ENCODE measurements at regions of chr1 and their contacts with region 1.

Region 1: GRCh38 chr1:108079440-108080025 is 114.6 kb upstream of the VAV3 start:
- DNase-seq: peak; percentile 21 to 67
- ATAC-seq: peak; percentile 39 to 47 (median 43)
- H3K4me3 ChIP-seq: no peak overlapping the region
- H3K4me3 Mint-ChIP-seq: peak overlapping the region; percentile 61
- H3K27ac ChIP-seq: peak overlapping the region; percentile 74
- H3K27ac Mint-ChIP-seq: peak overlapping the region; percentile 61 to 82
- H3K4me1 ChIP-seq: peaks cover 45% of the 10 kb centered on the region
- H3K4me1 Mint-ChIP-seq: peaks cover 62 to 63% of the 10 kb centered on the region in 2 donors
- H3K27me3 ChIP-seq: no peaks in the 10 kb centered on the region
- H3K27me3 Mint-ChIP-seq: no peaks in the 10 kb centered on the region
- CTCF ChIP-seq: no peak

Region 2: GRCh38 chr1:108009603-108010195 is 69.8 kb before region 1 on chr1:
- intact Hi-C with region 1: no loop called
- DNase-seq: no peak
- ATAC-seq: no peak
- H3K4me3 ChIP-seq: no peak overlapping the region
- H3K4me3 Mint-ChIP-seq: no peak overlapping the region
- H3K27ac ChIP-seq: no peak overlapping the region
- H3K27ac Mint-ChIP-seq: no peak overlapping the region
- H3K4me1 ChIP-seq: no peaks in the 10 kb centered on the region
- H3K4me1 Mint-ChIP-seq: peaks cover 0 to 5% of the 10 kb centered on the region in 2 donors
- H3K27me3 ChIP-seq: no peaks in the 10 kb centered on the region
- H3K27me3 Mint-ChIP-seq: no peaks in the 10 kb centered on the region
- CTCF ChIP-seq: no peak

Region 3: DNA sequence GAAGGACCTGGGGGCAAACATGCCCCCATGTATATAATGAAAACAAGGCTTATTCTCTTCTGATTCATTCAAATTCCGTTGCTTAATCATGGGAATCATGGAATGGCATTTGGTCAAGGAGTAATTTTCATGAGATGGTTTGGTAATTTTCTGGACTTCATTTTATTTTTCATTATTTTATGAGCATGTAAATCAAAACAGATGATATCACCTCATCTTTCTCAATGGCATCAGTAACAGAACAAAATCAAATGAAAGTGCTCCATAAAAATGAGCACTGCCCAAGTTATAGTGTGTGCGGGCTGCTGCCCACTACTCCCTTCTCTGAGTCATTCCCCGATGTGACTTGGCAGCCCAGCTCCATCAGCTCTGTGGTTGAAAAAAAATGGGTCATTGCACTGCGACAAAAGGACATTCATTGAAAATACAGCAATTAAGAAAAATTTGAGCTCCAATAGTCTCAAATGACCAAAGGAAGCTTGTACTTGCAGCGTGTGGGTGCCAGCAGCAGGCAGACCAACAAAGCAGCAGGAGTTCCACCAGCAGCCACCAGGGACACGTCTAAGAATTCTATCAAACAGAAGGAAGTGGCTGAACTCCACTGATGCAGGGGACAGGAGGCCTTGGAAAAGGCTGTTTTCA is 30.2 kb before region 1 on chr1:
- intact Hi-C with region 1: loop called (anchors 5 kb)
- DNase-seq: peak in 1 of 2 donors; percentile 49
- ATAC-seq: peak; percentile 63 to 79 (median 66)
- H3K4me3 ChIP-seq: no peak overlapping the region
- H3K4me3 Mint-ChIP-seq: peak overlapping the region; percentile 69
- H3K27ac ChIP-seq: no peak overlapping the region
- H3K27ac Mint-ChIP-seq: peak overlapping the region in 1 of 2 donors; percentile 18
- H3K4me1 ChIP-seq: peaks cover 27% of the 10 kb centered on the region
- H3K4me1 Mint-ChIP-seq: peaks cover 11 to 12% of the 10 kb centered on the region in 2 donors
- H3K27me3 ChIP-seq: no peaks in the 10 kb centered on the region
- H3K27me3 Mint-ChIP-seq: no peaks in the 10 kb centered on the region
- CTCF ChIP-seq: peak; percentile 62